CD4-positive, alpha-beta memory T cell (primary cell): ENCODE measurements at regions of chr1 and their contacts with region 1.

Region 1: GRCh38 chr1:155001675-155002463 is 733 bp upstream of the ZBTB7B start:
- DNase-seq: peak; percentile 95 to 98 (median 97)
- H3K4me3 ChIP-seq: peak overlapping the region; percentile 78 to 80
- H3K4me3 Mint-ChIP-seq: peak overlapping the region; percentile 88 to 99 (median 96)
- H3K27ac ChIP-seq: peak overlapping the region; percentile 92
- H3K27ac Mint-ChIP-seq: peak overlapping the region; percentile 90 to 99 (median 95)
- H3K4me1 ChIP-seq: peaks cover 59% of the 10 kb centered on the region
- H3K4me1 Mint-ChIP-seq: peaks cover 39 to 78% (median 51%) of the 10 kb centered on the region in 4 donors
- H3K27me3 ChIP-seq: no peaks in the 10 kb centered on the region
- H3K27me3 Mint-ChIP-seq: no peaks in the 10 kb centered on the region

Region 2: GRCh38 chr1:154698320-154699096 is 303.4 kb before region 1 on chr1:
- CTCF ChIA-PET with region 1: no interaction called
- POLR2A ChIA-PET with region 1: no interaction called
- intact Hi-C with region 1: no loop called
- DNase-seq: no peak
- H3K4me3 ChIP-seq: no peak overlapping the region
- H3K4me3 Mint-ChIP-seq: no peak overlapping the region
- H3K27ac ChIP-seq: no peak overlapping the region
- H3K27ac Mint-ChIP-seq: no peak overlapping the region
- H3K4me1 ChIP-seq: no peaks in the 10 kb centered on the region
- H3K4me1 Mint-ChIP-seq: no peaks in the 10 kb centered on the region
- H3K27me3 ChIP-seq: peaks cover 7% of the 10 kb centered on the region
- H3K27me3 Mint-ChIP-seq: peaks cover 4 to 20% of the 10 kb centered on the region in 2 donors

Region 3: GRCh38 chr1:154955718-154956543 is 45.9 kb before region 1 on chr1 and contains the start of gene PBXIP1:
- CTCF ChIA-PET with region 1: interaction called, 30 read pairs
- POLR2A ChIA-PET with region 1: interaction called, 1,543 read pairs
- intact Hi-C with region 1: loop called (anchors 1 kb)
- DNase-seq: peak; percentile 92 to 94 (median 92)
- H3K4me3 ChIP-seq: peak within 1 kb of the TSS; percentile 80 to 90
- H3K4me3 Mint-ChIP-seq: peak within 1 kb of the TSS; percentile 94 to 100 (median 98)
- H3K27ac ChIP-seq: peak within 1 kb of the TSS; percentile 100
- H3K27ac Mint-ChIP-seq: peak within 1 kb of the TSS; percentile 98 to 100 (median 100)
- H3K4me1 ChIP-seq: peaks cover 75% of the 10 kb centered on the region
- H3K4me1 Mint-ChIP-seq: peaks cover 43 to 87% (median 74%) of the 10 kb centered on the region in 4 donors
- H3K27me3 ChIP-seq: no peaks in the 10 kb centered on the region
- H3K27me3 Mint-ChIP-seq: no peaks in the 10 kb centered on the region
- total RNA-seq, gene PBXIP1: 435 to 438 TPM

Region 4: GRCh38 chr1:154961497-154962262 is 40.2 kb before region 1 on chr1 and contains the start of gene PYGO2:
- CTCF ChIA-PET with region 1: interaction called, 19 read pairs
- POLR2A ChIA-PET with region 1: interaction called, 1,543 read pairs
- intact Hi-C with region 1: loop called (anchors 1 kb)
- DNase-seq: peak; percentile 81 to 88 (median 82)
- H3K4me3 ChIP-seq: peak within 1 kb of the TSS; percentile 63 to 65
- H3K4me3 Mint-ChIP-seq: peak within 1 kb of the TSS; percentile 94 to 98 (median 97)
- H3K27ac ChIP-seq: peak within 1 kb of the TSS; percentile 84
- H3K27ac Mint-ChIP-seq: peak within 1 kb of the TSS; percentile 97 to 99 (median 98)
- H3K4me1 ChIP-seq: peaks cover 43% of the 10 kb centered on the region
- H3K4me1 Mint-ChIP-seq: peaks cover 21 to 57% (median 37%) of the 10 kb centered on the region in 4 donors
- H3K27me3 ChIP-seq: no peaks in the 10 kb centered on the region
- H3K27me3 Mint-ChIP-seq: no peaks in the 10 kb centered on the region
- total RNA-seq, gene PYGO2: 78.4 to 80.2 TPM

Region 5: DNA sequence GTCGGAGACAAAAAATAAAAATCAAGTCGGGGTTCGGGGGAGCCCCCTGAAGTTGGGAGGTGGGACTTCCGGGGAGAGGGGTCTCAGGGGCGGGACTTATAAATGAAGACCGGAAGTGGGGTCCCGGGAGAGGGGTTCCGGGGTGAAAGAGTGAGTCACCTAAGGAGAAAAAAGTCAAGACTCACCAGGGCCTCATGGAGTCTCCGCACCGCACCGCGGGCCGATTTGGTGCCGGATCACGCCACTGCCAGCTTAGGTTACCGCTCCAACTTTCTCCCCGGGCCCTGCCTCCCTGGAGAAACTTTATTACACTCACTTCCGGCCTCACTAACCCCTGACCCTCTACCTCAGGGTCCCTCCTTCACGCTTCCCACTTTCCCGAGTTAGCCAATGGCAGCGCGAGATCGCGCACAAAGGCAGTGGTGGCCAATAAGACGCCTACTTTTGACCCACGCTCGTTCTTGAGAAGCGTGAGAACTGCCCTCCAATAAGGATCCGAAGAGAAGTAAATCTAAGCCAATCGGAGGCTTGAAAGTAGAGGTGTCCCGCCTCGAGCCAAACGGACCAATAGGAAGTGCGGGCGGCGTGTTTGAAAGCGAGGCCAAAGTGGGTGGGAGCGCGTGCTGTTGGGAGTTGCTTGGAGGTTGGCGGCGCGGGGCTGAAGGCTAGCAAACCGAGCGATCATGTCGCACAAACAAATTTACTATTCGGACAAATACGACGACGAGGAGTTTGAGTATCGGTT is 27.6 kb before region 1 on chr1 and contains the start of gene CKS1B:
- CTCF ChIA-PET with region 1: interaction called, 47 read pairs
- POLR2A ChIA-PET with region 1: interaction called, 1,543 read pairs
- intact Hi-C with region 1: loop called (anchors 1 kb)
- DNase-seq: peak; percentile 99
- H3K4me3 ChIP-seq: peak within 1 kb of the TSS; percentile 67 to 100
- H3K4me3 Mint-ChIP-seq: no peak within 1 kb of the TSS
- H3K27ac ChIP-seq: peak within 1 kb of the TSS; percentile 95
- H3K27ac Mint-ChIP-seq: no peak within 1 kb of the TSS
- H3K4me1 ChIP-seq: peaks cover 45% of the 10 kb centered on the region
- H3K4me1 Mint-ChIP-seq: peaks cover 22 to 39% (median 26%) of the 10 kb centered on the region in 4 donors
- H3K27me3 ChIP-seq: no peaks in the 10 kb centered on the region
- H3K27me3 Mint-ChIP-seq: no peaks in the 10 kb centered on the region
- total RNA-seq, gene CKS1B: 12.2 to 13.0 TPM

Region 6: GRCh38 chr1:154982897-154983648 is 18.8 kb before region 1 on chr1 and contains the start of gene FLAD1:
- CTCF ChIA-PET with region 1: interaction called, 30 read pairs
- POLR2A ChIA-PET with region 1: interaction called, 1,543 read pairs
- intact Hi-C with region 1: loop called (anchors 1 kb)
- DNase-seq: peak; percentile 96 to 99 (median 96)
- H3K4me3 ChIP-seq: peak within 1 kb of the TSS; percentile 79 to 92
- H3K4me3 Mint-ChIP-seq: no peak within 1 kb of the TSS
- H3K27ac ChIP-seq: peak within 1 kb of the TSS; percentile 76
- H3K27ac Mint-ChIP-seq: peak within 1 kb of the TSS in 1 of 7 donors; percentile 92
- H3K4me1 ChIP-seq: peaks cover 27% of the 10 kb centered on the region
- H3K4me1 Mint-ChIP-seq: peaks cover 4 to 8% (median 6%) of the 10 kb centered on the region in 4 donors
- H3K27me3 ChIP-seq: no peaks in the 10 kb centered on the region
- H3K27me3 Mint-ChIP-seq: no peaks in the 10 kb centered on the region
- total RNA-seq, gene FLAD1: 52.4 to 56.6 TPM

Region 7: GRCh38 chr1:155012026-155012546 is 10.2 kb after region 1 on chr1:
- CTCF ChIA-PET with region 1: interaction called, 381 read pairs
- POLR2A ChIA-PET with region 1: interaction called, 314 read pairs
- intact Hi-C with region 1: loop called (anchors 1 kb)
- DNase-seq: peak in 2 of 5 donors; percentile 19 to 41
- H3K4me3 ChIP-seq: peak overlapping the region; percentile 4 to 20
- H3K4me3 Mint-ChIP-seq: peak overlapping the region; percentile 72 to 98 (median 88)
- H3K27ac ChIP-seq: peak overlapping the region; percentile 86
- H3K27ac Mint-ChIP-seq: peak overlapping the region; percentile 62 to 97 (median 94)
- H3K4me1 ChIP-seq: peaks cover 91% of the 10 kb centered on the region
- H3K4me1 Mint-ChIP-seq: peaks cover 39 to 93% (median 62%) of the 10 kb centered on the region in 4 donors
- H3K27me3 ChIP-seq: no peaks in the 10 kb centered on the region
- H3K27me3 Mint-ChIP-seq: no peaks in the 10 kb centered on the region

Region 8: GRCh38 chr1:155044812-155045690 is 43.2 kb after region 1 on chr1:
- CTCF ChIA-PET with region 1: interaction called, 12 read pairs
- POLR2A ChIA-PET with region 1: no interaction called
- intact Hi-C with region 1: loop called (anchors 5 kb)
- DNase-seq: peak; percentile 60 to 66 (median 64)
- H3K4me3 ChIP-seq: no peak overlapping the region
- H3K4me3 Mint-ChIP-seq: no peak overlapping the region
- H3K27ac ChIP-seq: no peak overlapping the region
- H3K27ac Mint-ChIP-seq: peak overlapping the region in 1 of 7 donors; percentile 5
- H3K4me1 ChIP-seq: peaks cover 5% of the 10 kb centered on the region
- H3K4me1 Mint-ChIP-seq: peaks cover 7 to 16% (median 11%) of the 10 kb centered on the region in 4 donors
- H3K27me3 ChIP-seq: no peaks in the 10 kb centered on the region
- H3K27me3 Mint-ChIP-seq: no peaks in the 10 kb centered on the region